SK-N-SH (cell line): ENCODE measurements at regions of chr7 and their contacts with region 1.

Region 1: GRCh38 chr7:130084037-130084875 is 13.9 kb downstream of the KLHDC10 start:
- DNase-seq: no peak
- H3K4me3 ChIP-seq: no peak overlapping the region
- H3K27ac ChIP-seq: no peak overlapping the region
- H3K4me1 ChIP-seq: peaks cover 0 to 11% of the 10 kb centered on the region in 2 experiments; a peak in 1 of 4 replicates
- H3K27me3 ChIP-seq: no peaks in the 10 kb centered on the region
- CTCF ChIP-seq: peak; percentile 66
- EP300 ChIP-seq: no peak
- RAD21 ChIP-seq: no peak

Region 2: DNA sequence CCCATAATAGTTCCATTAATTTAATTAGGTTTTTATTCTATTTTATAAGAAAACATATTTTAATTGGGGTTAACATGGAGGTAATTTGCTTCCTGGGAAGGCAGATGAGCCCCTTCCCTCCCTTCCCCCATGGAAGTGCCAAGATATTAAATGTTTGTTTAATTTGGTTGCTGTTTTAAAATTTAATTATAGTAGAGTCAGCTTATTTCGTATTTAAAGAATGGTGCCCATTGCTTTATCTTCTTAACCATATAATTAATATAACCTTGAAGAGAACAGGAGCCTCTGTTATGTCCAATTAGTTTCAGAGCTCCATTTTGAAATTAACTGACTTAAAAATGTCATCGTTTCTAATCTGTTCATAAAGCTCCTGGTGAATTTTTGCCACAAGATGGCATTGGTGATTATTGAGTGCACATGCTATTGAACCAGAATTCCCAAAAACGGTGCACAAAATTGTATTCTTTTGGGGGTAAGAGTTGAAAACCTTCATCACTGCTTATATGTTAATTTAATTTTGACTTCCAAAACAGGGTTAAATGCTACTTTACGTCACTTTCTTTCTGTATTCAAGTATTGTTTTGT is 12.1 kb after region 1 on chr7:
- CTCF ChIA-PET with region 1: interaction called, 27 read pairs
- POLR2A ChIA-PET with region 1: no interaction called
- DNase-seq: no peak
- H3K4me3 ChIP-seq: no peak overlapping the region
- H3K27ac ChIP-seq: no peak overlapping the region
- H3K4me1 ChIP-seq: peaks cover 0 to 2% of the 10 kb centered on the region in 2 experiments; a peak in 1 of 4 replicates
- H3K27me3 ChIP-seq: no peaks in the 10 kb centered on the region
- CTCF ChIP-seq: peak; percentile 48
- EP300 ChIP-seq: no peak
- RAD21 ChIP-seq: peak; percentile 48